ENCODE measurements at regions of chr17 and their contacts with region 1.

Region 1: DNA sequence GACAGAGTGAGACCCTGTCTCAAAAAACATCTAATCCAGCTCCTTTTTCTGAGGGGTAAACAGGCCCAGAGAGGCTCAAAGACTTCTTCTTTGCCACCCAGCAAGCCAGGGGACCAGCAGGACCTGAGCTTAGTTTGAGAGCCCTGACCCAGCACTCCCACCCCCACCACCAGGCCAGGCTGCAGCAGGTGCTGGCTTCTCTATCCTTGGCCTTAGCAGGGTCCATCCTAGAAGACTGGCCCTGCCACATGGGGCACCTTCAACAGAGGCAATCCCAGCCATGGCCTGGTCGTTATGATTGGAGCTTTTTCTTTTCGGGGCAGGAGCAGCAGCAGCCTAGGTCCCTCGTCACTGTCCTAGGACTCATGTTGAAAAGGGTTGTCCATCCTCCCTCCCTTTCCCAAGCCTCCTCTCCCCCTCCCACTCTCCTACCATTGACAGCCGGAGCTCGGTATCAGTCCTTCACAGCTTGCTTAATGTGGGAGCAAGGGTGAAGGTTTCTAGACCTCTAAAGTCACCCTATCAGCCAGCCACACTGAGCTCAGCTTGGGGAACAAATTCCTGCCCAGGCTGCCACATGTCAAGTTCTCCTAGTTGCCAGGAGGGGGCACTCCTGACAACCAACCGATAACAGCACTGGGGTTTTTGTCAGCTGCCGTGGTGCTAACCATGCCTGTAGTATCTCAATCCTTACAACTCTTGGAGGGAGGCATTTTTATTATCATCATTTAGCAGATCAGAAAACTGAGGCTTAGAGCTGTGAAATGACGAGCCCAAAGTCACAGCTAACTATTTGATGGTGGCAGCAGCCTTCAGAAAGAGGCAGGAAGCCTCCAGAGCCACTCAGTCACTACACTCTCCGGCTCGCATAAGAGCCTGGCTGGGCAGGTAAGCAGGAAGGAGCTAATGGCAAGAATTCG is 11.2 kb downstream of the MRPL27 start:
- DNase-seq: peak in 8 of 9 donors; percentile 44 to 70 (median 61)
- ATAC-seq: peak; percentile 94
- H3K4me3 ChIP-seq: no peak overlapping the region
- H3K4me3 Mint-ChIP-seq: peak overlapping the region; percentile 19 to 76 (median 44)
- H3K27ac ChIP-seq: peak overlapping the region; percentile 12
- H3K27ac Mint-ChIP-seq: peak overlapping the region; percentile 6 to 93 (median 42)
- H3K4me1 ChIP-seq: peaks cover 0 to 6% of the 10 kb centered on the region in 2 donors
- H3K4me1 Mint-ChIP-seq: peaks cover 7 to 15% (median 9%) of the 10 kb centered on the region in 7 donors
- H3K27me3 ChIP-seq: no peaks in the 10 kb centered on the region
- H3K27me3 Mint-ChIP-seq: no peaks in the 10 kb centered on the region

Region 2: DNA sequence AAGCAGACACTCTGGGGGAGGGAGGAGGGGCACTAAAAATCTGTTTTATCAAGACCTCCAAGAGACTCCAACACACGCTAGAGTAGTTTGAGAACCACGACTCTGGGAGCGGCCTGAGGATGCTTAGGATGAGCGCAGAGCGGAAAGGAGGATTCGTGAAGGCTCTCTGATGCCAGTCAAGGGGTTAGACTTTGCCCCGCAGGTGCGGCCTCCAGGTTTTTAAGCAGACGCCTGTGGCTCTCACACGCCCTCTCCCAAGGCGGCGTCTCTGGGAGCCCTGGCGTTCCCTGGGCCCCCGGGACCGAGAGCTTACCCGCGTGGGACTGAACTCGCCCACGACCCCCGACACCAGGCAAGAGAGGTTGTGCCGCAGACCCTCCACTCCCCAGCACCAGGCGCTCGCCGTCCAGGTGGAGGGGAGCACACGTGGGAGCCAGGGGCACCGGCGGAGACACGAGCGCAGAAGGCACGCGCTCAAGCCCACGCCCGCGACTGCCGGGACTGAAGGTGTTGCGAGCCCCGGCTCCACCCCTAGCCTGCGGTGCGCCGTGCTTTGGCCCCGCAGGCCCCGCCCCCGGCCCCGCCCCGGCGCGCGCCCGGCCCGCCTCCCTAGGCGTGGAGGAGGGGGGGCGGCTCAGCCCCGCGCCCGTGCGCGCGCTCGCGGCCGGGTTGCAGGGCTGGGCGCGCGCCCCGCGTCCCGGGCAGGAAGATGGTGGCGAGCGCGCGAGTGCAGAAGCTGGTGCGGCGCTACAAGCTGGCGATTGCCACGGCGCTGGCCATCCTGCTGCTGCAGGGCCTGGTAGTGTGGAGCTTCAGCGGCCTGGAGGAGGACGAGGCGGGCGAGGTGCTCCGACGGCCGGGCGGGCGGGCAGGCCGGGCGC is 16.1 kb before region 1 on chr17 and contains the start of gene XYLT2:
- CTCF ChIA-PET with region 1: interaction called, 14 read pairs
- POLR2A ChIA-PET with region 1: interaction called, 7 read pairs
- intact Hi-C with region 1: no loop called
- DNase-seq: peak; percentile 89 to 98 (median 93)
- ATAC-seq: peak; percentile 98
- H3K4me3 ChIP-seq: peak within 1 kb of the TSS; percentile 79
- H3K4me3 Mint-ChIP-seq: peak within 1 kb of the TSS; percentile 77 to 94 (median 91)
- H3K27ac ChIP-seq: peak within 1 kb of the TSS; percentile 84
- H3K27ac Mint-ChIP-seq: peak within 1 kb of the TSS; percentile 85 to 95 (median 90)
- H3K4me1 ChIP-seq: peaks cover 22% of the 10 kb centered on the region in 2 donors
- H3K4me1 Mint-ChIP-seq: peaks cover 17 to 45% (median 34%) of the 10 kb centered on the region in 7 donors
- H3K27me3 ChIP-seq: no peaks in the 10 kb centered on the region
- H3K27me3 Mint-ChIP-seq: no peaks in the 10 kb centered on the region
- total RNA-seq, gene XYLT2: 18.6 to 43.7 (median 34.1) TPM

Region 3: DNA sequence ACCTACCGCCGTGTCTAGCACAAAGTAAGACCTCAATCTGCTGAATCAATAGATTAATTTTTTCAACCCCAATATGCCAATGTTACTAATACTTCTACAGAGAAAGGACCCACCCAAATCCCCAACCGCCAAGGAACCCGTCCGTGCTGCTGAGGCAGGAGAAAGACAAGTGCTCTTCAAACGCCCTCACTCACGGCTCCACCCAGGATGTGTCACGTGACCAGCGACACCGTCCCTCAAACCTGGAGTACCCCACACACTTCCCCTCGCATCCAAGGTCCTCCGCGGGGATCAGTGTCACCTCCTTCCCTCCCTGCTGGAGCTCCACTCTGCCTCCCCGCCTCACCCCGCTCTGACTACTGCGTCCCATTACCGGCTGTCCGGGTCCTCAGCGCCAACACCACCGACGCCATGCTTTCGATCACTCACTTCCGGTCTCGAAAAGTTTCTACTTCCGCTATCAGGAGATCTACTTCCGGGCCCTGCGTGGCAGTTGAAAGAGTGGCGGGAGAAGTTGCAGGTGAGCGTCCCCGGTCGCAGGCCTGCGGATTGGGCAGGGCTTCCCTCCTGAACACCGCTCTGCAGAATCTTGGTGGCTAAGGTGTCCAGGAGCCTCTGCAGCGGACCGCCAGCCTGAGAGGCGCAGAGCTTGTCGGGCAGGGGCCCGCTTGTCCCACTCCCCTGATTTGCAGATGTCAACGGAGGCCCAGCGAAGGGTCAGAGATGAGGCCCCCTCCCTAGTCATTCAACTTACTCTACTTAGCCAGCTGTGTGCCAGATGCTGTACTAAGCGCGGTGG is 11.1 kb after region 1 on chr17 and contains the starts of genes EME1 and MRPL27:
- CTCF ChIA-PET with region 1: interaction called, 12 read pairs
- POLR2A ChIA-PET with region 1: interaction called, 8 read pairs
- intact Hi-C with region 1: loop called in 1 of 2 experiments (anchors 1 kb)
- DNase-seq: peak; percentile 81 to 95 (median 92)
- ATAC-seq: peak; percentile 94
- H3K4me3 ChIP-seq: peak within 1 kb of the TSS; percentile 99
- H3K4me3 Mint-ChIP-seq: peak within 1 kb of the TSS; percentile 92 to 100 (median 98)
- H3K27ac ChIP-seq: peak within 1 kb of the TSS; percentile 99
- H3K27ac Mint-ChIP-seq: peak within 1 kb of the TSS; percentile 97 to 100 (median 99)
- H3K4me1 ChIP-seq: peaks cover 9 to 13% of the 10 kb centered on the region in 2 donors
- H3K4me1 Mint-ChIP-seq: peaks cover 18 to 41% (median 31%) of the 10 kb centered on the region in 7 donors
- H3K27me3 ChIP-seq: no peaks in the 10 kb centered on the region
- H3K27me3 Mint-ChIP-seq: no peaks in the 10 kb centered on the region
- total RNA-seq, gene EME1: 0.61 to 17.5 (median 2.2) TPM
- total RNA-seq, gene MRPL27: 29.5 to 64.7 (median 32.0) TPM

Region 4: DNA sequence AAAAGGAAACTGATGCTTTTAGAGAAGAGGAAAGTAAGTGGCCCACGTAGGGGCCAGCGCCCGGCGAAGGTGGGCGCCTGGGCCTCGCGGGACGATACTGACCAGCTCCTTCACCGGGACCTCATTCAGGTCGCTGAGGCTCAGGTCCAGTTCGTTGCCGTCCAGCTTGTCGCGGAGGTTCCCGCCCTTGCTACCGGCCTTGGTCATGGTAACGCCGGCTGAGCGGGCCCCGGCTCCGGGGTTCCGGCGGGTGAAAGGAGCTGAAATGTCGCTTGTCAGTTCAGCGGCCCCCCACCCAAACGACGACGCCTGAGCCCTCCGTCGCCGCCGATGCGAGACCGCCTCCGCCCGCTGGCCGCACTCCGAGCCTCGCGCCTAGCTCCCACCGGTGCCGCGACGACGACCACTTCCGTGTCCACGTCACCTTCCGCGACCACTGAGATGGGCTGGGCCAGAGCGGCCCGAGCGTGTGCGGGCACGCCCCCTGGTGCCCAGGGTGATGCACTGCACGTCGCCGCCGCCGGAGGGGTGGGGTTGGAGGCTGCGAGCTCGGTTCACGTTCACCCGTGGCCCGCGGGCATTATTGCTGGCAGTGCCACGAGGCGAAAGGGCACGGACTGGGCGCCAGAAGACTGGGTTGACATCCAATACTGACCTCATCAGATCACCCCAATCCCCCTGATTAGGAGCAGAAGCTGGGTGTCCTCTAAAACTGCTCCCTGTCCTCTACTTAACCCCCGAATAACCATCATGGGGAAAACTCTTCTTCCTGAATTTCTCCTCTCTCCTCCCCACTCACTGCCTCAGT is 35.5 kb after region 1 on chr17 and contains the start of gene LRRC59:
- CTCF ChIA-PET with region 1: interaction called, 44 read pairs
- POLR2A ChIA-PET with region 1: interaction called, 16 read pairs
- intact Hi-C with region 1: loop called (anchors 5 kb)
- DNase-seq: peak; percentile 86 to 99 (median 93)
- ATAC-seq: peak; percentile 100
- H3K4me3 ChIP-seq: peak within 1 kb of the TSS; percentile 69
- H3K4me3 Mint-ChIP-seq: peak within 1 kb of the TSS; percentile 78 to 99 (median 92)
- H3K27ac ChIP-seq: peak within 1 kb of the TSS; percentile 93
- H3K27ac Mint-ChIP-seq: peak within 1 kb of the TSS; percentile 83 to 96 (median 93)
- H3K4me1 ChIP-seq: peaks cover 15 to 18% of the 10 kb centered on the region in 2 donors
- H3K4me1 Mint-ChIP-seq: peaks cover 21 to 47% (median 34%) of the 10 kb centered on the region in 7 donors
- H3K27me3 ChIP-seq: no peaks in the 10 kb centered on the region
- H3K27me3 Mint-ChIP-seq: no peaks in the 10 kb centered on the region
- total RNA-seq, gene LRRC59: 27.6 to 67.1 (median 42.4) TPM

Region 5: GRCh38 chr17:50501054-50501453 is 139.2 kb after region 1 on chr17:
- CTCF ChIA-PET with region 1: no interaction called
- POLR2A ChIA-PET with region 1: no interaction called
- intact Hi-C with region 1: loop called in 1 of 2 experiments (anchors 1 kb)
- DNase-seq: peak in 1 of 9 donors; percentile 18
- ATAC-seq: no peak
- H3K4me3 ChIP-seq: no peak overlapping the region
- H3K4me3 Mint-ChIP-seq: no peak overlapping the region
- H3K27ac ChIP-seq: no peak overlapping the region
- H3K27ac Mint-ChIP-seq: no peak overlapping the region
- H3K4me1 ChIP-seq: peaks cover 0 to 8% of the 10 kb centered on the region in 2 donors
- H3K4me1 Mint-ChIP-seq: peaks cover 0 to 23% (median 13%) of the 10 kb centered on the region in 7 donors
- H3K27me3 ChIP-seq: no peaks in the 10 kb centered on the region
- H3K27me3 Mint-ChIP-seq: peaks cover 0 to 3% (median 0%) of the 10 kb centered on the region in 5 donors

Measured in naive thymus-derived CD4-positive, alpha-beta T cell (primary cell).